ENCODE measurements at regions of chr4 and their contacts with region 1.

Region 1: GRCh38 chr4:155953151-155954114 is at the start of gene CTSO:
- DNase-seq: peak; percentile 70
- H3K4me3 Mint-ChIP-seq: peak within 1 kb of the TSS; percentile 98
- H3K27ac Mint-ChIP-seq: peak within 1 kb of the TSS; percentile 100
- H3K4me1 Mint-ChIP-seq: peaks cover 8% of the 10 kb centered on the region
- H3K27me3 Mint-ChIP-seq: no peaks in the 10 kb centered on the region
- CTCF ChIP-seq: peak; percentile 24
- total RNA-seq, gene CTSO: 7.3 and 9.1 TPM in 2 replicates

Region 2: GRCh38 chr4:155403886-155404285 is 549.5 kb before region 1 on chr4:
- CTCF ChIA-PET with region 1: interaction called, 4 read pairs
- intact Hi-C with region 1: loop called (anchors 2 kb)
- DNase-seq: no peak
- H3K4me3 Mint-ChIP-seq: no peak overlapping the region
- H3K27ac Mint-ChIP-seq: no peak overlapping the region
- H3K4me1 Mint-ChIP-seq: peaks cover 19% of the 10 kb centered on the region
- H3K27me3 Mint-ChIP-seq: no peaks in the 10 kb centered on the region
- CTCF ChIP-seq: peak; percentile 28

Region 3: GRCh38 chr4:155809835-155810234 is 143.6 kb before region 1 on chr4:
- CTCF ChIA-PET with region 1: interaction called, 20 read pairs
- intact Hi-C with region 1: loop called (anchors 1 kb)
- DNase-seq: peak; percentile 7
- H3K4me3 Mint-ChIP-seq: no peak overlapping the region
- H3K27ac Mint-ChIP-seq: no peak overlapping the region
- H3K4me1 Mint-ChIP-seq: no peaks in the 10 kb centered on the region
- H3K27me3 Mint-ChIP-seq: no peaks in the 10 kb centered on the region
- CTCF ChIP-seq: peak; percentile 25

Region 4: DNA sequence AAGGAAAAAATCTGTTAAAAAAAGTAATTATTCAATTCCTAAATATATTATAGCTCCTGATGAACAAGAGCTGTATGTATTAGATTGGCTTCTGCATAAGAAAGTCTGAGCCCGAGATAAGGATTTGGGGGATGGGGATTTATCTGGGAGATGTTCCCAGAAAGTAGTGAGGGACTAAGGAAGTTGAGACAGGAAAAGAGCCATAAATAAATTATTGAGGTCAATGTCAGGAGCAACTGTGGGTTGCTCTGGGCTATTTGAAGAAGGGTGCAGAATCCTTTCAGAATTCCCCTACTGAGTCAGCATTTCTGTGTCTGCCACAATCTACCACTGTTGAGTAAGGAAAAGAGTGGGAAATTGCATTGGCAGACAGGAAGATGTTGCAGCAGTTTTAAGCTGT is 53.1 kb before region 1 on chr4:
- CTCF ChIA-PET with region 1: no interaction called
- intact Hi-C with region 1: no loop called
- DNase-seq: no peak
- H3K4me3 Mint-ChIP-seq: no peak overlapping the region
- H3K27ac Mint-ChIP-seq: no peak overlapping the region
- H3K4me1 Mint-ChIP-seq: peaks cover 9% of the 10 kb centered on the region
- H3K27me3 Mint-ChIP-seq: no peaks in the 10 kb centered on the region
- CTCF ChIP-seq: no peak